Left ventricle myocardium inferior (tissue), 1 donor: ENCODE measurements at regions of chr4 and their contacts with region 1.

Region 1: GRCh38 chr4:26719954-26720552 is 136.2 kb downstream of the TBC1D19 start:
- DNase-seq: no peak
- H3K4me3 ChIP-seq: no peak overlapping the region
- H3K27ac ChIP-seq: no peak overlapping the region
- H3K4me1 ChIP-seq: no peaks in the 10 kb centered on the region
- H3K27me3 ChIP-seq: no peaks in the 10 kb centered on the region
- CTCF ChIP-seq: peak; percentile 62

Region 2: GRCh38 chr4:26459054-26459755 is 260.8 kb before region 1 on chr4:
- intact Hi-C with region 1: loop called (anchors 10 kb)
- DNase-seq: no peak
- H3K4me3 ChIP-seq: no peak overlapping the region
- H3K27ac ChIP-seq: no peak overlapping the region
- H3K4me1 ChIP-seq: no peaks in the 10 kb centered on the region
- H3K27me3 ChIP-seq: no peaks in the 10 kb centered on the region
- CTCF ChIP-seq: peak; percentile 69

Region 3: GRCh38 chr4:27616166-27616565 is 896.1 kb after region 1 on chr4:
- intact Hi-C with region 1: no loop called
- DNase-seq: no peak
- H3K4me3 ChIP-seq: no peak overlapping the region
- H3K27ac ChIP-seq: no peak overlapping the region
- H3K4me1 ChIP-seq: no peaks in the 10 kb centered on the region
- H3K27me3 ChIP-seq: no peaks in the 10 kb centered on the region
- CTCF ChIP-seq: no peak